Breast epithelium (tissue), 4 donors: ENCODE measurements at regions of chr12 and their contacts with region 1.

Region 1: DNA sequence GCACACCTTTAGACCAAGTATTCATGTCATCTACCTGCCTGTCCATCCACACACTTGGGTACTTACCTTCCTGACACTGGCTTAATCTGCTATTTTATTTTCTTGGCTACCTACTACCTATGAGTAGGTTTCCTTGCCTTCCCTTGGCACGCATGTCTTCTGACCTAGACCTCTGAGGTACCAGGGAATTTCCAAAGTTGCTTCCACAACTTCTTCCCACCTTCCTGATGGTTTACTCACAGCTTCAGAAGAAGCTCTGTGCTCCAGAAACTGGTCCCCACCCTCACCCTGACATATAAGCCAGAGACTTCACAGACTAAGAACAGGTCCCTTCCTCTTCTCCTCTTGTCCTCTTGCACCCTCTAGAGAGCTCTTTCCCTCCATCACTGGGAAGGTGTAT is 35.7 kb upstream of the DDX11 start:
- DNase-seq: no peak
- H3K4me3 ChIP-seq: no peak overlapping the region
- H3K27ac ChIP-seq: no peak overlapping the region
- H3K4me1 ChIP-seq: no peaks in the 10 kb centered on the region
- H3K27me3 ChIP-seq: no peaks in the 10 kb centered on the region
- CTCF ChIP-seq: no peak
- POLR2A ChIP-seq: no peak

Region 2: GRCh38 chr12:30980955-30981662 is 56.8 kb before region 1 on chr12:
- intact Hi-C with region 1: loop called (anchors 2 kb)
- DNase-seq: no peak
- H3K4me3 ChIP-seq: no peak overlapping the region
- H3K27ac ChIP-seq: no peak overlapping the region
- H3K4me1 ChIP-seq: no peaks in the 10 kb centered on the region
- H3K27me3 ChIP-seq: no peaks in the 10 kb centered on the region
- CTCF ChIP-seq: no peak
- POLR2A ChIP-seq: no peak